ENCODE measurements at regions of chr2 and their contacts with region 1.

Region 1: GRCh38 chr2:218777276-218777990 is 4.5 kb upstream of the CYP27A1 start:
- DNase-seq: no peak

Region 2: DNA sequence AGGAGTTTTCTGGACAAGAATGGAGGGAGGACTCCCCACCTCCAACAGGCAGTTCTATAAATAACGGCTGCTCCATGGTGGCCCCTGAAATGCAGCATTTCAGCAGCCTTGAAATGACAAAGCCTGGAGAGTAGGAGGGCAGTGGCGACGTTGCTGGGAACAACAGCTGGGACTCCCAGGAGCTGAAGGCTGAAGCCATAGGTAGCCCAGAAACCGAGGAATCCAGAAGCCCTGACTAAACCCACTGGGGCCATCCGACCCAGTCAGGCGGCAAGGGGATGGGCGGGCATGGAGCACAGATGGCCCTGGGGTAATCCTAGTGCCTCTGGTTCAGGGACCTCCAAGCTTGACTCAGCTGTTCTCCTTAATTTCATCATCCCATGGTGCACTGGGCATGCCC is 45.2 kb after region 1 on chr2:
- intact Hi-C with region 1: loop called in 1 of 2 experiments (anchors 2 kb)
- DNase-seq: peak; percentile 58

Measured in posterior vena cava (tissue), 2 donors.